Gastrocnemius medialis (tissue), 4 donors: ENCODE measurements at regions of chr14 and their contacts with region 1.

Region 1: GRCh38 chr14:90750701-90751100 is 65.5 kb downstream of the TTC7B start:
- DNase-seq: no peak
- ATAC-seq: peak; percentile 87 to 94
- H3K4me3 ChIP-seq: no peak overlapping the region
- H3K27ac ChIP-seq: peak overlapping the region; percentile 62 to 95 (median 78)
- H3K4me1 ChIP-seq: peaks cover 18 to 21% of the 10 kb centered on the region in 2 donors
- H3K27me3 ChIP-seq: no peaks in the 10 kb centered on the region
- CTCF ChIP-seq: no peak
- POLR2A ChIP-seq: no peak

Region 2: GRCh38 chr14:90739318-90740068 is 11.2 kb before region 1 on chr14:
- in situ Hi-C with region 1: no loop called
- intact Hi-C with region 1: loop called (anchors 1 kb)
- DNase-seq: peak; percentile 71 to 88
- ATAC-seq: peak; percentile 97
- H3K4me3 ChIP-seq: peak overlapping the region in 1 of 4 donors; percentile 32
- H3K27ac ChIP-seq: peak overlapping the region; percentile 84 to 97 (median 91)
- H3K4me1 ChIP-seq: peaks cover 43 to 52% of the 10 kb centered on the region in 2 donors
- H3K27me3 ChIP-seq: no peaks in the 10 kb centered on the region
- CTCF ChIP-seq: no peak
- POLR2A ChIP-seq: peak in 1 of 2 donors; percentile 51

Region 3: DNA sequence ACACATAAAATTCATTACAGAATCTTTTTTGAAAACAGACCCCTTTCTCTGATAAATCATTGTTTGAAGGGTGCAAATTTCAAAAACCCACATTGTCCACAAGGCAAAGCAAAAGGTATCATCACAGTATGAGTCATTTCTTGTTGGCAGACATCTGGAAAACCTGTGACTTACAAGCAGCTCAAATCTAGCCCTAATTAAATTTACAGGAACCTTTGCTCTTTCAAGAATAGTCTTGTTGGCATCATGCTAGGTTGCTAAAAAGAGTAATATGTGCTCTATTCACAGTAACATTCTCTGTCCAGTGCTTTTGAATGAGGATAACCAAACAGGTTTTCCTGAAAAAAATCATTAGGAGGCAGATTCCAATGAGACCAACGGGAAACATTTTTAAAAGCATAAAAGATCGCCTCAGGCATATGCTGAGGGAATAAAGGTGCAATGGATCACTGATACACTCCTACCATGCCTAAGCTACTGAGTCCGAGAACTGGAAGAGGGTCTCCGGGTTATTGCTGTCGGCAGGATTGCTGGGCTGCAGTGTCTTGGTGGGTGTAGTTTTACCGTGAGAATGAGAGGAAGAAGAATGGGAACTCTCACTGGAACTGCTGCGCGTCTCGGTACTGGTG is 121.0 kb after region 1 on chr14:
- in situ Hi-C with region 1: no loop called
- intact Hi-C with region 1: no loop called
- DNase-seq: peak in 1 of 2 donors; percentile 21
- ATAC-seq: peak; percentile 95 to 97
- H3K4me3 ChIP-seq: peak overlapping the region in 1 of 4 donors; percentile 3
- H3K27ac ChIP-seq: peak overlapping the region in 3 of 4 donors; percentile 57 to 71 (median 62)
- H3K4me1 ChIP-seq: peaks cover 11 to 29% of the 10 kb centered on the region in 2 donors
- H3K27me3 ChIP-seq: no peaks in the 10 kb centered on the region
- CTCF ChIP-seq: no peak
- POLR2A ChIP-seq: no peak